ENCODE measurements at regions of chr20 and their contacts with region 1.

Region 1: DNA sequence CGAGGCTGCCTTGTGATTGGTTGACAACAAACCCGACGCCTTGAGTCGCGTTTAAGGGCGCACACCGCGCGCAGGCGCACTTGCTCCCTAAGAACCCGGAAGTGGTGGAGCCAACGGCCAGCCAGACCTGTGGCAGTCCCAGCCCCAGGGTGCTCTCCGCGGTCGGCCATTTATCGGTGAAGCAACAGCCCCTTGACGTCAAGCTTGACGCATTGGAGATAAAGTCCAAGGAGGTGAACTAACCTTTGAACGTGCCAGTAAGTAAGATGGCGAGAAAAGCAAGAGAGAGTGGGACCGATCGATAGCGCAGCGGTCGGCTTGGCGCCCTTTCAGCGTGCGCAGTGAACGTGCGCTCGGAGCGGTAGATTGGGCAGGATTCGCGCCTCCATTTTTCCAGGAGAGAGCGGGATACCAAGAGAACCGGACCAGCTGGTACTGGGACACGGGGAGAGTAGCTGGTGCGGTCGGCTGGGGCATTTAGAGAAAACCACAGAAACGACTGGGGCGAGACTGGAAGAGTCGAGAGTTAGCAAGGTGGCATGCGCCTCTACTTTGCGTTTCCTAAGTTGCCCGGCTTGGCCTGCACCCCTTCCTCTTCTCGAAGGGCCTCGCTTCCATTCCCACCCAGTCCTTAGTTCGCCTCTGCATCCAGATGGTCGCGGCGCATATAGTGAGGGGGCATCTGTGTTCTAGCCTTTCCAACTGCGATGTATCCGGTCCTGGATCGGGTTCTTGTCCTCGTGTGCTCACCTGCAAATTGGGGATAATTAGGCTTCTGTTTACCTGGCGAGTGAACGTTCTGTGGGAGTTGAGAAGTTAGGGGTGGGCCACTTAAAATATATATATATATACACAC is at the start of gene CSTF1:
- DNase-seq: peak; percentile 100
- H3K4me3 ChIP-seq: peak within 1 kb of the TSS; percentile 74 to 95 (median 85)
- H3K27ac ChIP-seq: peak within 1 kb of the TSS; percentile 80 to 94 (median 90)
- H3K4me1 ChIP-seq: peaks cover 24 to 38% (median 28%) of the 10 kb centered on the region in 4 donors
- H3K27me3 ChIP-seq: no peaks in the 10 kb centered on the region
- CTCF ChIP-seq: peak in 1 of 3 experiments; percentile 16
- EP300 ChIP-seq: no peak
- POLR2A ChIP-seq: no peak
- total RNA-seq, gene CSTF1: 16.2 to 22.9 (median 20.7) TPM

Region 2: DNA sequence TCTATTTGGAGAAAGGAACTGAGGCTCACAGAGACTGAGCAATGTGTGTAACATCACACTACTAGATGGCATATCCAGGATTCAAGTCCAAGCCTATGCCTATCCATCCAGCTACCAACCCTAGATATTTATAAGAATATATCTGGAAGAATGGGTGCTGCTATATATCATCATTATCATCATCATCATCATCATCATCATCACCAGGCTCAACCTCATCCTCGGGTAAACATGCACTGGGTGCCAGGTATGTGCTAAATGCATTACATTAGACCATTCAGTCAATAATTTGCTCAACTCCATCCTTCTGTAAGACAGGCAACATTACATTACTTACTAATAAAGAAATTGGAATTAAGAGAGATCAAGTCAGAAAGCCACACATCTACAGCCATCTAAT is 262.3 kb before region 1 on chr20:
- intact Hi-C with region 1: no loop called
- DNase-seq: no peak
- H3K4me3 ChIP-seq: no peak overlapping the region
- H3K27ac ChIP-seq: no peak overlapping the region
- H3K4me1 ChIP-seq: no peaks in the 10 kb centered on the region
- H3K27me3 ChIP-seq: no peaks in the 10 kb centered on the region
- CTCF ChIP-seq: no peak
- EP300 ChIP-seq: no peak
- POLR2A ChIP-seq: no peak

Region 3: DNA sequence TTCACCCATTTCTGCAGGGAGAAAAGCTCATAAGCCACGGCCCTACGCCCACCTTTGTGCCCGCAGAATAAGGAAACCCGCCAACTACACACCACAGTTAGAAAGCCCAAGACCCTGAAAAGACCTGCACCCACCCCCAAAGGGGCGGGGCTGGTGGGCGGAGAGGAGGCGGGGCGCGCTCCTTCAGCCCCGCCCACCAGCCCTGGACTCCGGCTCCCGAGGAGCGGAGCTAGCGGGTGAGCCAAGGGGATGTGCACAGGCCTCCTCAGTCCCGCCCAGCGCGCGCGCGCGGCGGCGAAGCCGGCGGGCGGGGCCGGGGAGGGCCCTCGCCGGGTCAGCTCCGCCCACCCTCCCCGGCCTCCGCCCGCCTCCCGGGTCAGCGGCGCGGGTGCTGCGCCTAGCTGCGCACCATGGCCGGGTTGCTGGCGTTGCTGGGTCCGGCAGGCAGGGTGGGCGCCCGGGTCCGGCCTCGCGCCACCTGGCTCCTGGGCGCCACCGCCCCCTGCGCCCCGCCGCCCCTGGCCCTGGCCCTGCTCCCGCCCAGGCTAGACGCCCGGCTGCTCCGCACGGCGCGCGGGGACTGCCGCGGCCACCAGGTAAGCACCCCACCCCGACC is 33.8 kb before region 1 on chr20 and contains the start of gene FAM210B:
- intact Hi-C with region 1: loop called (anchors 2 kb)
- DNase-seq: no peak
- H3K4me3 ChIP-seq: peak within 1 kb of the TSS; percentile 87 to 98 (median 94)
- H3K27ac ChIP-seq: peak within 1 kb of the TSS; percentile 82 to 89 (median 87)
- H3K4me1 ChIP-seq: peaks cover 15 to 46% (median 36%) of the 10 kb centered on the region in 4 donors
- H3K27me3 ChIP-seq: no peaks in the 10 kb centered on the region
- CTCF ChIP-seq: no peak
- EP300 ChIP-seq: no peak
- POLR2A ChIP-seq: no peak
- total RNA-seq, gene FAM210B: 48.2 to 75.0 (median 54.5) TPM

Region 4: GRCh38 chr20:56468316-56469082 is 76.0 kb after region 1 on chr20 and contains the start of gene RTF2:
- intact Hi-C with region 1: loop called (anchors 2 kb)
- DNase-seq: peak; percentile 98
- H3K4me3 ChIP-seq: peak within 1 kb of the TSS; percentile 73 to 96 (median 79)
- H3K27ac ChIP-seq: peak within 1 kb of the TSS; percentile 85 to 90 (median 88)
- H3K4me1 ChIP-seq: peaks cover 25 to 35% (median 30%) of the 10 kb centered on the region in 4 donors
- H3K27me3 ChIP-seq: no peaks in the 10 kb centered on the region
- CTCF ChIP-seq: peak in 1 of 3 experiments; percentile 6
- EP300 ChIP-seq: no peak
- POLR2A ChIP-seq: no peak
- total RNA-seq, gene RTF2: 71.0 to 93.3 (median 78.5) TPM

Measured in esophagus muscularis mucosa (tissue), 4 donors.